Endothelial cell of umbilical vein (primary cell): ENCODE measurements at regions of chr4 and their contacts with region 1.

Region 1: DNA sequence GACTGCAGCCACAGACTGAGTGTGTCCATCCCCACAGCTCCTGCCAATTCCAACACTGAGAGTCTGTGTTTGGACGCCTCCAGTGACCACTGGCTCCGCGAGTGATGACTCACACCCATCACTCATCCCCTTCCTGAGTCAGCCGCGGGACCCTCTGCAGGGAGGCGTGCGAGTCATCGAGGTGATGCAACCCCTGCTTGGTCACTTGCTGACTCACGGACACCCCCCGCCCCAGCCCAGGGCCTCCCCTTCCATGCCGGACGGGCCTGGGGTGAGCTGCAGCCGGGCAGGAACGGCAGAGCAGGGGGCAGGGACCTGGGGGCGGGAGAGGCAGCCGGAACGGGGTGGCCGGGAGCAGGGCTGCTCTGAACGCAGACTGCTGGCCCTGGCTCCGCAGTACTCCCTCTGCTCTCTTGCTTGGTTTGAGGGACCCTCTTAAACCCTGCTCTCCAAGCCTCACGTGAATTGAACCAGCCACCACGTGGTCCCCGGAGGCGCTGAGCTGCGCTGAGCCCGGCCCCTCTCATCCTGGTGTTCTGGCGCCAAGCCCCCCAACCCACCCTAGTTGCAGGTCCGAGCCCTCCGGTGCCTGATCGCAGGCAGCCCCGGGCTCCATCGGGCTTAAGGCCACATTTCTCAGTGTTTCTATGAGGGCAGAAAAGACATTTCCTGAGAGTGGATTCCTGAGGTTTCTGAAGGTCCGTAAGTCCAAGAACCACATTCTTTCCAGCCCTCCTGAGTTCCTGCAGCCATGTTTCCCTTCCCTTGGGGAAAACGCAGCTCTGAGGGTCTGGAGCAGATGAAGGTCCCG is 32.4 kb downstream of the FGFRL1 start:
- DNase-seq: peak; percentile 98
- H3K4me3 ChIP-seq: no peak overlapping the region
- H3K27ac ChIP-seq: peak overlapping the region; percentile 85
- H3K4me1 ChIP-seq: peaks cover 30% of the 10 kb centered on the region
- H3K27me3 ChIP-seq: no peaks in the 10 kb centered on the region
- CTCF ChIP-seq: no peak
- POLR2A ChIP-seq: peak; percentile 62

Region 2: GRCh38 chr4:781493-782216 is 262.2 kb before region 1 on chr4:
- CTCF ChIA-PET with region 1: no interaction called
- POLR2A ChIA-PET with region 1: no interaction called
- dilution Hi-C with region 1: no loop called
- intact Hi-C with region 1: loop called (anchors 5 kb)
- DNase-seq: peak; percentile 100
- H3K4me3 ChIP-seq: peak overlapping the region; percentile 75 to 99 (median 91)
- H3K27ac ChIP-seq: peak overlapping the region; percentile 91
- H3K4me1 ChIP-seq: peaks cover 17% of the 10 kb centered on the region
- H3K27me3 ChIP-seq: peaks cover 0 to 2% of the 10 kb centered on the region in 2 experiments
- CTCF ChIP-seq: no peak
- POLR2A ChIP-seq: peak; percentile 90

Region 3: GRCh38 chr4:931960-932712 is 111.7 kb before region 1 on chr4 and contains the starts of genes GAK and TMEM175:
- CTCF ChIA-PET with region 1: no interaction called
- POLR2A ChIA-PET with region 1: no interaction called
- dilution Hi-C with region 1: no loop called
- intact Hi-C with region 1: loop called (anchors 2 kb)
- DNase-seq: peak; percentile 98
- H3K4me3 ChIP-seq: peak within 1 kb of the TSS; percentile 82 to 83 (median 82)
- H3K27ac ChIP-seq: peak within 1 kb of the TSS; percentile 71
- H3K4me1 ChIP-seq: peaks cover 9% of the 10 kb centered on the region
- H3K27me3 ChIP-seq: no peaks in the 10 kb centered on the region
- CTCF ChIP-seq: no peak
- POLR2A ChIP-seq: peak; percentile 92
- total RNA-seq, gene GAK: 109 and 110 TPM in 2 replicates
- total RNA-seq, gene TMEM175: 16.5 and 21.9 TPM in 2 replicates

Region 4: GRCh38 chr4:1011022-1011694 is 32.7 kb before region 1 on chr4 and contains the start of gene FGFRL1:
- CTCF ChIA-PET with region 1: interaction called, 11 read pairs
- POLR2A ChIA-PET with region 1: no interaction called
- dilution Hi-C with region 1: no loop called
- intact Hi-C with region 1: loop called (anchors 1 kb)
- DNase-seq: peak; percentile 76
- H3K4me3 ChIP-seq: peak within 1 kb of the TSS; percentile 52 to 85 (median 66)
- H3K27ac ChIP-seq: no peak within 1 kb of the TSS
- H3K4me1 ChIP-seq: peaks cover 9% of the 10 kb centered on the region
- H3K27me3 ChIP-seq: peaks cover 13 to 16% of the 10 kb centered on the region in 2 experiments
- CTCF ChIP-seq: no peak
- POLR2A ChIP-seq: no peak
- total RNA-seq, gene FGFRL1: 33.3 and 34.8 TPM in 2 replicates

Region 5: GRCh38 chr4:1152290-1152689 is 108.4 kb after region 1 on chr4:
- CTCF ChIA-PET with region 1: no interaction called
- POLR2A ChIA-PET with region 1: interaction called, 19 read pairs
- dilution Hi-C with region 1: no loop called
- intact Hi-C with region 1: no loop called
- DNase-seq: no peak
- H3K4me3 ChIP-seq: no peak overlapping the region
- H3K27ac ChIP-seq: no peak overlapping the region
- H3K4me1 ChIP-seq: no peaks in the 10 kb centered on the region
- H3K27me3 ChIP-seq: no peaks in the 10 kb centered on the region
- CTCF ChIP-seq: no peak
- POLR2A ChIP-seq: no peak